ENCODE measurements at regions of chr4 and their contacts with region 1.

Region 1: DNA sequence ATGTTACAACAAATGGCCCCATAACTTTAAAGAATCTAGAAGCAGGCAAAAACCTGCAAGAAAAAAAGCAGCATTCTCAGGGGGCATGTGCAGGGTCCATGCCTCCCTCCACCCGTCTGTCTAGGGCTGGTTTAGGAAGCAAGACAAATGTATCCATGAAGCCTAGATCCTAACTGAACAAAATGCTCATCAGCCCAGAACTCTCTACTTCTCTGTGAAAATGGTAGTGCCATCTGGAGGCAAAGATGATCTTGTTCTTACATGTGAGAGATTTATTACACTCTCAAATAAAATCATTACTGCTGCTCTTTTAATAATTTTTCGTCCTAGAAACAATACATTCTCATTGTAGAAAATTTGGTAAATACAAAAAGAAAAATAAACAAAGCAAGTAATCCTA is 26.7 kb downstream of the NR3C2 start:
- DNase-seq: no peak
- ATAC-seq: no peak; the same call in 2 of the 3 replicates
- H3K4me3 ChIP-seq: no peak overlapping the region
- H3K27ac ChIP-seq: no peak overlapping the region
- H3K4me1 ChIP-seq: no peaks in the 10 kb centered on the region
- H3K27me3 ChIP-seq: no peaks in the 10 kb centered on the region
- CTCF ChIP-seq: peak; percentile 35
- EP300 ChIP-seq: no peak
- POLR2A ChIP-seq: no peak
- RAD21 ChIP-seq: no peak

Region 2: GRCh38 chr4:148044912-148045352 is 370.6 kb before region 1 on chr4:
- CTCF ChIA-PET with region 1: no interaction called
- POLR2A ChIA-PET with region 1: no interaction called
- in situ Hi-C with region 1: no loop called
- intact Hi-C with region 1: loop called (anchors 5 kb)
- DNase-seq: peak; percentile 3
- ATAC-seq: peak; percentile 80
- H3K4me3 ChIP-seq: no peak overlapping the region
- H3K27ac ChIP-seq: no peak overlapping the region
- H3K4me1 ChIP-seq: no peaks in the 10 kb centered on the region
- H3K27me3 ChIP-seq: no peaks in the 10 kb centered on the region
- CTCF ChIP-seq: peak; percentile 35
- EP300 ChIP-seq: no peak
- POLR2A ChIP-seq: no peak
- RAD21 ChIP-seq: no peak

Region 3: GRCh38 chr4:148288448-148288847 is 127.1 kb before region 1 on chr4:
- CTCF ChIA-PET with region 1: interaction called, 5 read pairs
- POLR2A ChIA-PET with region 1: no interaction called
- in situ Hi-C with region 1: loop called (anchors 10 kb)
- intact Hi-C with region 1: loop called (anchors 1 kb)
- DNase-seq: no peak
- ATAC-seq: no peak
- H3K4me3 ChIP-seq: no peak overlapping the region
- H3K27ac ChIP-seq: no peak overlapping the region
- H3K4me1 ChIP-seq: 0 out of 2 replicates have a peak, but pooled peaks cover 5% of the 10 kb centered on the region
- H3K27me3 ChIP-seq: no peaks in the 10 kb centered on the region
- CTCF ChIP-seq: no peak
- EP300 ChIP-seq: no peak
- POLR2A ChIP-seq: no peak
- RAD21 ChIP-seq: no peak

Region 4: DNA sequence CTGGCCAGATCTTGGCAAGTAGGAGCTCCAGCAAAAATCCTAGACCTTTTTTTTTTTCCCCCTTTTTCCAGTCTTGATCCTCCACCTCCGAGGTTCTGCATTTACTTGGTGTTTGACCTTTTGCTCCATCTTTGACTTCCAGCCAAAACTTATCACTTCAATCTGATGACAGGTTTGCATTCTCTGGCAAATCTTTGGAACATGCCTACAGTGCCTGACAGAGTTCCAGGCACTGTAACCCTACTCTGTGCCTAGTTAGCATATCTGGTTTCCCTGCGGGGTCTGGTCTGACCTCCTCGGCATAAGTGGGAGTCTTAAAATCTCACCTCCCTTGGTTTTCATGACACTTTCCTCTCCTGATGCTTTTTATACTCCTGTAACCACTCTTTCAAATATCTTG is 66.1 kb after region 1 on chr4:
- CTCF ChIA-PET with region 1: no interaction called
- POLR2A ChIA-PET with region 1: no interaction called
- in situ Hi-C with region 1: no loop called
- intact Hi-C with region 1: loop called (anchors 2 kb)
- DNase-seq: no peak
- ATAC-seq: no peak
- H3K4me3 ChIP-seq: no peak overlapping the region
- H3K27ac ChIP-seq: no peak overlapping the region
- H3K4me1 ChIP-seq: no peaks in the 10 kb centered on the region
- H3K27me3 ChIP-seq: no peaks in the 10 kb centered on the region
- CTCF ChIP-seq: no peak
- EP300 ChIP-seq: no peak
- POLR2A ChIP-seq: no peak
- RAD21 ChIP-seq: no peak